Caco-2 (cell line): ENCODE measurements at regions of chr19 and their contacts with region 1.

Region 1: DNA sequence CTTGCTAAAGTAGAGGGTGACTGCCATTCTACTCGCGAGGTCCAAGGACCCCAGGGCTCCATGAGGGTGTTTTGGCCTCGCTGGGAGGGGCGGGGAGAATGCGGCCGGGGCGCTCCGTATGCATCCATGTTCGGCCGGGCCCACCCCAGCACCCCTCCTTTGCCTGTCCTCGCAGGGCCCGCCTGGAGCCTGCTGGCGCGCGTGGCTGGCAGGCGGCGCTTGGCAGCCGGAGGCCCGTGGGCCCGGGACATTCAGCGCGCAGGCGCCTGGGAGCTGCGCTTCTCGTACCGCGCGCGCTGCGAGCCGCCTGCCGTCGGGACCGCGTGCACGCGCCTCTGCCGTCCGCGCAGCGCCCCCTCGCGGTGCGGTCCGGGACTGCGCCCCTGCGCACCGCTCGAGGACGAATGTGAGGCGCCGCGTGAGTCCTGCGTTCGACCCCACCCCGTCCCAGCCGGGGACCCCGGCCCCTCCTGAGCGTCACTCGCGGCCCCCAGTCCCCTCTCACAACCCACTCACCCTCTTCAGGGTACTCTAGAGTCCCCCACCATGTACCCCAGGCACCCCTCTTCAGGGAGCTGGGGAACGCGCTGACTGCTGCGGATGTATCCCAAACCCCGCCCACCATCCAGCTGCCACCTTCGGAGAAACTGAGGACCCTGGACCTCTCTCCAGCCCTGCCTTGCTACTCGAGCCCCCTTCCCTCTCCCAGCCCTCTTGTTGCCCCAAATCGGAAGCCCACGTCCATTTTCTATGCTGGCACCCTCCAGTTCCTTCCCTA is 4.1 kb downstream of the DLL3 start:
- DNase-seq: peak; percentile 67 to 90
- H3K4me3 ChIP-seq: peak overlapping the region; percentile 29
- H3K4me3 Mint-ChIP-seq: peak overlapping the region; percentile 64
- H3K27ac Mint-ChIP-seq: no peak overlapping the region
- H3K4me1 ChIP-seq: peaks cover 15% of the 10 kb centered on the region
- H3K4me1 Mint-ChIP-seq: peaks cover 16% of the 10 kb centered on the region
- H3K27me3 ChIP-seq: peaks cover 1% of the 10 kb centered on the region
- H3K27me3 Mint-ChIP-seq: peaks cover 31% of the 10 kb centered on the region
- CTCF ChIP-seq: peak; percentile 79 to 99

Region 2: DNA sequence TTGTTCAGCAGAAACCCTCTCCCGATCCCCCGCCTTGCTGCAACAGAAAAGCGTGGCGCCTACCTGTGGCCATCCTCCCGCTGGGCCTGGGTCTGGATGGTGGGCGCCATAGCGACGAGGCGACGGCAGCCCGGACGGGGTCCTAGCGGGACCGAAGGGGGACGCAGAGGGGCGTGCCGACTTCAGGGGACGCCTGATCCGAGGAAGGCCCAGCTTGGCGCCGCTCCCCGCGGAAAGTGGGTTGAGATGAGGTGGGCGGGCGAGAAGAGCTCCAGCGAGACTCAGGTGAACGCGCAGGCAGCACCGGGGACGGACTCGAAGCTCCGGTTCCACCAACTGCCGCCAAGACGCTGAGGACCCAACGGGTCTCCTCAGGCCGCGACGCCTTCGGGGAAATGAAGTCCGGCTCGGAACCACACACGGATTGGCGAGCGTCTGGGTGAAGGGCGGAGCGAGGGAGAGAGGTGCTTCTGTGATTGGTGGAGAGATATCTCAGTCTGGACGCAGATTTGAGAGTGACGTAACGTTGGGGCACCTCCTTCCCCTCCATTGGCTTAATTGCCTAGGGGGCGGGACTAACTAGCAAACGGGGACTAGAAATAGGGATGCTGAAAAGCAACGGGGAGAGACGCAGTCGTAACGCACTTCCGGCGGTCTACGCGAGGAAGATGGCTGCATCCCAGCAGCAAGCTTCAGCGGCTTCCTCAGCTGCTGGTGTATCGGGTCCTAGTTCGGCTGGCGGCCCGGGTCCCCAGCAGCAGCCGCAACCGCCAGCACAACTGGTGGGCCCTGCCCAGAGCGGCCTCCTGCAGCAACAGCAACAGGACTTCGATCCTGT is 111.9 kb before region 1 on chr19 and contains the starts of genes MED29 and PAF1:
- CTCF ChIA-PET with region 1: no interaction called
- POLR2A ChIA-PET with region 1: no interaction called
- intact Hi-C with region 1: no loop called
- DNase-seq: peak; percentile 98 to 99
- H3K4me3 ChIP-seq: peak within 1 kb of the TSS; percentile 76
- H3K4me3 Mint-ChIP-seq: peak within 1 kb of the TSS; percentile 99
- H3K27ac Mint-ChIP-seq: peak within 1 kb of the TSS; percentile 92
- H3K4me1 ChIP-seq: peaks cover 10% of the 10 kb centered on the region
- H3K4me1 Mint-ChIP-seq: peaks cover 33% of the 10 kb centered on the region
- H3K27me3 ChIP-seq: no peaks in the 10 kb centered on the region
- H3K27me3 Mint-ChIP-seq: no peaks in the 10 kb centered on the region
- CTCF ChIP-seq: peak in 1 of 2 experiments; percentile 46
- total RNA-seq, gene MED29: 50.3 and 50.8 TPM in 2 replicates
- total RNA-seq, gene PAF1: 57.9 and 59.0 TPM in 2 replicates

Region 3: DNA sequence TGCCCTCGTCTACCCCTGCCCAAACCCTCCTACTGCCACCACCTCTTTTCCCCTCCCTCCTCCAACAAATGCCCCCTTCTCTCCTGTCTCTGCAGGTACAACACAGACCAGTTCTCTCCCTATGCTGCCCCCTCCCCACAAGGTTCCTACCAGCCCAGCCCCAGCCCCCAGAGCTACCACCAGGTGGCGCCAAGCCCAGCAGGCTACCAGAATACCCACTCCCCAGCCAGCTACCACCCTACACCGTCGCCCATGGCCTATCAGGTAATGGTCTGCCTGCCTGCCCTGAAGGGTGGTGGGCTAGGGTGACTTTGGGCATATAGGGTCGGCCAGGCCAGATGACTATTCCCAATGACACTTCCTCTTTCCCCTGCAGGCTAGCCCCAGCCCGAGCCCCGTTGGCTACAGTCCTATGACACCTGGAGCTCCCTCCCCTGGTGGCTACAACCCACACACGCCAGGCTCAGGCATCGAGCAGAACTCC is 28.6 kb before region 1 on chr19:
- CTCF ChIA-PET with region 1: interaction called, 18 read pairs
- POLR2A ChIA-PET with region 1: no interaction called
- intact Hi-C with region 1: no loop called
- DNase-seq: peak; percentile 73 to 88
- H3K4me3 ChIP-seq: no peak overlapping the region
- H3K4me3 Mint-ChIP-seq: no peak overlapping the region
- H3K27ac Mint-ChIP-seq: no peak overlapping the region
- H3K4me1 ChIP-seq: no peaks in the 10 kb centered on the region
- H3K4me1 Mint-ChIP-seq: no peaks in the 10 kb centered on the region
- H3K27me3 ChIP-seq: no peaks in the 10 kb centered on the region
- H3K27me3 Mint-ChIP-seq: no peaks in the 10 kb centered on the region
- CTCF ChIP-seq: peak; percentile 94 to 98

Region 4: DNA sequence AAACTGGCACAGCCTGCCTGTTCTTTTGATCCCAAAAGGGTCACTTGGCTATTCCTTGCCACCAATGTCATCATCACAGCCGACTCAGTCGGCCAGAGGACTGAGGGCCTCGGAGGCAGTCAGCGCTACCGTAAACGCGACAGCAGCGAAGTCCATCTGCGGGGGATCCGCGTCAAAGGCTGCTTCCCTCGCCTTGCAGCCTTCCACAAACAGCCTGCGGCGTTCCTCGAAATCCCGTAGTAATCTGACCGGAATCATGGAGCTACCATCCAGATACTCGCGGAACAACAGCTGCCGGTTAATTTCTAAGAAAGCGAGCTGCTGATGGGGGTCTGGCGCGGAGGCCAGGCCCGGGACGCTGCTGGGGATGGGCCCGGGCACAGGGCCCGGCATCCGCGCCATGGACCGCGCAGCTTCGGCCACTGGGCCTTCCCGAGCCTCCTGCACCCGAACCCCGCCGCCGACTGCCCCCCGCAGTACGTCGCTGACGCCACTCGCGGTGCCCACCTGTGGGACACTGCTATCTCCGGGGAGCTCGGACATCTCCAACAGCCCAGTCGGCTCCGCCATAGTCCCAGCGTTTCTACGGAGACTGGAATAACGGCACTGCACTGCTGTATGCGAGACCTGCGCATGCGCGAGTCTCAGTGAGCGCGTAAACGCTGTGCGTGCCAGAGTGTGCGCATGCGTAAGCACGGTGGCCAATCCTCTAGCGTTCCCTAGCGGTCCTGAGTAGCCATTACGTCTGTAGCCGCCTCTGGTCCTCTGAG is 29.6 kb after region 1 on chr19 and contains the start of gene EID2B:
- CTCF ChIA-PET with region 1: interaction called, 21 read pairs
- POLR2A ChIA-PET with region 1: interaction called, 9 read pairs
- intact Hi-C with region 1: loop called (anchors 1 kb)
- DNase-seq: peak; percentile 93 to 95
- H3K4me3 ChIP-seq: peak within 1 kb of the TSS; percentile 72
- H3K4me3 Mint-ChIP-seq: peak within 1 kb of the TSS; percentile 77
- H3K27ac Mint-ChIP-seq: no peak within 1 kb of the TSS
- H3K4me1 ChIP-seq: no peaks in the 10 kb centered on the region
- H3K4me1 Mint-ChIP-seq: no peaks in the 10 kb centered on the region
- H3K27me3 ChIP-seq: no peaks in the 10 kb centered on the region
- H3K27me3 Mint-ChIP-seq: no peaks in the 10 kb centered on the region
- CTCF ChIP-seq: peak; percentile 96 to 98
- total RNA-seq, gene EID2B: 2.1 and 2.8 TPM in 2 replicates

Region 5: DNA sequence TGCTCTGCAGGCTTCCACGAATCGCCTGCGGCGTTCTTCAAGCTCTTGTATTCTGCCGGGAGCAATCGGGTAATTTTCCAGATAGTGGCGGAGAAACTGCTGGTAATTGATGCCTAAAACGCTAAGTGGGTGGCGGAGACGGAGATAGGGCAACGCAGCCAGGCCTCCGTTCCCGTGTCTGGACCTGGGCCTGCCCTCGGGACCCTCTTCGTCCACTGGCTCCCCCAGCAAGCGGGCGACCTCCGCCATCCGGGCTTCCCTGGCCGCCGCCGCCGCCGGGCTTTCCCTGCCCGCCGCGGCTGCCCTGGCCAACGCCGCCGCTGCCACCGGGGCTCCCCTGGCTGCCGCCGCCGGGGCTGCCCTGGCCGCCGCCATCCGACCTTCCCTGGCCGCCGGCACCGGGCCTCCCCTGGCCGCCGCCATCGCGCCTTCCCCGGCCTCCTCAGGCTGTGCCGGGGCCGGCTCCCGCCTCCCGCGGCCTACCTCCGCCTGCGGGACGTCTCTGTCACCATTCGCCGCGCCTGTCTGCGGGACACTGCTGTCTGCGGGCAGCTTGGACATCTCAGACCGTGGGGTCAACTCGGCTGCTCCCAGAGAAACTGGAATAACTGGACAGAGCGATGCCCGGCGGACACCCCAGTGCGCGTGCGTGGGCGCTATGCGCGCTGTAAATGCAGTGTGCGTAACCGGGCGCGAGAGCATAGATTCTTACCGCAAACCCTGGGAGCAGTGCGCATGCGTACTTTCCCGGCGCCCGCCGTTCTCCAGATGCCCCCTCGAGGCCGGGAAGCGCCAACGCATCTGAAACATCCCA is 36.9 kb after region 1 on chr19 and contains the start of gene EID2:
- CTCF ChIA-PET with region 1: interaction called, 21 read pairs
- POLR2A ChIA-PET with region 1: no interaction called
- intact Hi-C with region 1: loop called (anchors 2 kb)
- DNase-seq: peak; percentile 95 to 97
- H3K4me3 ChIP-seq: peak within 1 kb of the TSS; percentile 82
- H3K4me3 Mint-ChIP-seq: peak within 1 kb of the TSS; percentile 90
- H3K27ac Mint-ChIP-seq: peak within 1 kb of the TSS; percentile 93
- H3K4me1 ChIP-seq: peaks cover 8% of the 10 kb centered on the region; the same call in 1 of the 2 replicates
- H3K4me1 Mint-ChIP-seq: peaks cover 15% of the 10 kb centered on the region
- H3K27me3 ChIP-seq: no peaks in the 10 kb centered on the region
- H3K27me3 Mint-ChIP-seq: peaks cover 4% of the 10 kb centered on the region
- CTCF ChIP-seq: peak; percentile 89
- total RNA-seq, gene EID2: 21.7 and 26.3 TPM in 2 replicates

Region 6: GRCh38 chr19:39617745-39618144 is 114.9 kb after region 1 on chr19:
- CTCF ChIA-PET with region 1: no interaction called
- POLR2A ChIA-PET with region 1: no interaction called
- intact Hi-C with region 1: no loop called
- DNase-seq: no peak
- H3K4me3 ChIP-seq: no peak overlapping the region
- H3K4me3 Mint-ChIP-seq: no peak overlapping the region
- H3K27ac Mint-ChIP-seq: no peak overlapping the region
- H3K4me1 ChIP-seq: no peaks in the 10 kb centered on the region
- H3K4me1 Mint-ChIP-seq: no peaks in the 10 kb centered on the region
- H3K27me3 ChIP-seq: no peaks in the 10 kb centered on the region
- H3K27me3 Mint-ChIP-seq: peaks cover 10% of the 10 kb centered on the region
- CTCF ChIP-seq: no peak

Region 7: DNA sequence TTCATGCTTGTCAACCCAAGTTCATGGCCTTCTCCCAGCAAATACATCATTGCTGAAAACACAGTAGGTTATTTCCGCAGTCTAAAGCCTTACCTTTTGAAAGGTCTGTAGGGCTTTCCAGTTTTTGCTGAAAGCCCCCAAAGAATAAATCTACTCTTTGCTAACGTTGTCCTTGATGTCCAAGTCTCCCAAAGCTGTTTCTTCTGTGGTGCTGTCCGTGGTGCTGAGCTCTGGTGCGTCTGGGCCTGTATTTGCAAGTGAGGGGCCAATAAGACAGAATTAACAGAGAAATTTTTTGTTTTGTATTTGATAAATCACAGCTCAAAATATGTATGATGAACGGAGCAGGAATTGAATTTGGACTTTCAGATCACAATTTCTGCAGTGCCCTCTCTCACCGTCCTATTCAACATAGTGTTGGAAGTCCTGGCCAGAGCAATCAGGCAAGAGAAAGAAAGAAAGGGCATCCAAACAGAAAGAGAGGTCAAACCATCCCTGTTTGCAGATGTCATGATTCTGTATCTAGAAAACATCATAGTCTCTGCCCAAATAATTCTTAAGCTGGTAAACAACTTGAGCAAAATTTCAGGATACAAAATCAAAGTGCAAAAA is 143.1 kb after region 1 on chr19:
- CTCF ChIA-PET with region 1: no interaction called
- POLR2A ChIA-PET with region 1: no interaction called
- intact Hi-C with region 1: no loop called
- DNase-seq: peak in 1 of 2 experiments; percentile 62
- H3K4me3 ChIP-seq: no peak overlapping the region
- H3K4me3 Mint-ChIP-seq: no peak overlapping the region
- H3K27ac Mint-ChIP-seq: no peak overlapping the region
- H3K4me1 ChIP-seq: no peaks in the 10 kb centered on the region
- H3K4me1 Mint-ChIP-seq: no peaks in the 10 kb centered on the region
- H3K27me3 ChIP-seq: no peaks in the 10 kb centered on the region; the same call in 1 of the 2 replicates
- H3K27me3 Mint-ChIP-seq: peaks cover 8% of the 10 kb centered on the region
- CTCF ChIP-seq: no peak

Region 8: GRCh38 chr19:39671738-39672363 is 169.0 kb after region 1 on chr19:
- CTCF ChIA-PET with region 1: interaction called, 10 read pairs
- POLR2A ChIA-PET with region 1: no interaction called
- intact Hi-C with region 1: no loop called
- DNase-seq: peak; percentile 48 to 66
- H3K4me3 ChIP-seq: no peak overlapping the region
- H3K4me3 Mint-ChIP-seq: no peak overlapping the region
- H3K27ac Mint-ChIP-seq: no peak overlapping the region
- H3K4me1 ChIP-seq: no peaks in the 10 kb centered on the region
- H3K4me1 Mint-ChIP-seq: peaks cover 7% of the 10 kb centered on the region
- H3K27me3 ChIP-seq: no peaks in the 10 kb centered on the region; the same call in 1 of the 2 replicates
- H3K27me3 Mint-ChIP-seq: peaks cover 9% of the 10 kb centered on the region
- CTCF ChIP-seq: peak; percentile 54 to 69